ENCODE measurements at regions of chr1 and their contacts with region 1.

Region 1: DNA sequence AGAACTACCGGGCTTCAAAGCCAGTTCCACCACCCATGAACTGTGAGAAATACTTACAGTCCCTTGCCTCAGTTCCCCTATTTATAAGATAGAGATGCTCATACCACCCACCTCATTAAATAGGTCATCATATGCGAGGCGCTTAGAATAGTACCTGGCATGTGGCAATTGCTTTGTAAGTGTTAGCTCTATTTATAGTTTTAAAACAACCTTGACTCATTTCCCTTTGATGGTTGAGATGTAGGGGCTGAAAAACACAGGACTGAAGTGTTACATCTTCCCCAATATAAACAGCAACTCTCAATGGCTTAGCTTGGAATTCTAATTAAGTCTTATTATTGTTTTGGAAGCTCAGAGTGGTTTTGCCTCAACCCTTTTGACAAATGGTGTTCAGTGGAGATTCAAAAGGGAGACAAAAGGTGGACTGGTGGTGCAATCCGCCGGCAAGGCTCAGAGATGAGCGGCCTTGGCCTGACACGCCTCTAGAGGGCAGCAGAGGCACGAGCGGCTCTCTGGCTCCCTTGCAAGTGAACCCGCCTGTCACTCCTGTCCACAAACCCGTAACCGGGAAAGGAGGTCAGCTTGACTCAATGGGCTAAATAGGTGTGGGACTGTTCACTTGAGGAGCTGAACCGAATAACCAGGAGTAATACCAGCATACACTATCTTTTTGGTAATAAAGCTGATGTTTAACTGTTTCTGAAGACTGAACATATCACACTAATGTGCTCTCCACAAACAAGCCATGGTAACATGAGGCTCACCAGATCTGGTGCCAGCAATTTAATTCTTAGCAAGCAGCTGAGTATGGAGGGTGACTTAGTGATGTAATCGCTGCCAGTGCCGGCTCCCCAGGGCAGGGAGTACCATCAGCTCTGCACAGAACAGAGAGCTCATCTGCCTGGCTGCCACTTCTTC is 19.5 kb upstream of the SMYD2 start:
- DNase-seq: peak; percentile 93
- ATAC-seq: peak; percentile 92
- H3K4me3 Mint-ChIP-seq: no peak overlapping the region
- H3K27ac Mint-ChIP-seq: no peak overlapping the region
- H3K4me1 Mint-ChIP-seq: peaks cover 22% of the 10 kb centered on the region
- H3K27me3 Mint-ChIP-seq: no peaks in the 10 kb centered on the region; the same call in 1 of the 2 replicates
- CTCF ChIP-seq: peak; percentile 86

Region 2: DNA sequence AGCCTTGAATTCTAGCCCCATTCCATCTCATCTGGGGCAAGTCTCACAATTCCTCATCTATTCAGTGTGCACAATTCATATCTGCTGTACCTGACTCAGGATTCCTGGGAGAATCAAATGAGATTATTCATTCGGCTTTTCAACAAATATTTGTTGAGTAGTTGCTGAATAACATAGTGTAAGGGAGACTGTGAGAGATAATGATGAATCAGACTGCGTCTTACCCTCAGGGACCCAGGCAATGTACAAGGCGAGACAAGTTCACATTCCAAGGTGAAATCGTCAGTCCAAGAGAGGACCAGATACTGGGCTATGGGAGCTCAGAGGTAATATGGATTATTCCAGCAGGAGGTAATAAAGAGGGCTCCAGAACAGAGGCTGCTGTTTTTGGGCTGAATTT is 48.3 kb before region 1 on chr1:
- CTCF ChIA-PET with region 1: interaction called, 31 read pairs
- POLR2A ChIA-PET with region 1: no interaction called
- DNase-seq: no peak
- ATAC-seq: no peak
- H3K4me3 Mint-ChIP-seq: no peak overlapping the region
- H3K27ac Mint-ChIP-seq: no peak overlapping the region
- H3K4me1 Mint-ChIP-seq: peaks cover 26% of the 10 kb centered on the region
- H3K27me3 Mint-ChIP-seq: no peaks in the 10 kb centered on the region
- CTCF ChIP-seq: no peak

Region 3: DNA sequence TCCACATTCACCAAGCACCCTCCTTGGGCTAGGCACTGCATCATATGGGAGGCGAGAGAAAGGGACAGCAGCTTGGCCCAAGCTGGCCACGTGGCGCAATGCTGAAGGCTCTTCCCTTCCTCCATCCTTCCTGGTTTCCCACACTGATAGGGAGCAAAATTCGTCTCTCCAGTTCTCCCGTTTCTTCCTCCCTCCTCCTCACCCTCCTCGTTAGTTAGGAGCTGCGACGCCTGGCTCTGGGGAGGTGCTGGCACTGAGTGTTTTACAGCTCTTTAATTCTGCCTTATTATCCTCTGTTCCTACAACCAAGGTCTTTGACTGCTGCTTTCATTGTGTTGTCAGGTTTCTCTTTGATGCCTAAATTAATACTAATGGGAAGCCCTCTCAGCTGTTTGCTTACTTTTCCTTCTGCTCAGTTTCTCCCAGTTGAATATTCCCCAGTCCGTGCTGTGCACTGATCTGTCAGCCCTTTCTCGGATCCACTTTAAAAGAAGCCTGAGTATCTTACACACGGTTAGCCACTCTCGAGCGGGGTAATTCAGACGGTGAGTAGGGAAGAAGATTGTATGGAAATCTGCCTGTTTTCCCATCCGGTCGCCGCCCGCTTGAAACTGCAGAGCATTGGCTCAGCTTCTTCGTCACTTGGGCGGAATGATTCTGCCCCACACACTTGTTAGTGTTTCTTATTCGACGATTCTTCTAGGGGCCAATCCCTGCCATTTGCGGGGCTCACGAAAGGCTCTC is 36.7 kb before region 1 on chr1:
- CTCF ChIA-PET with region 1: interaction called, 16 read pairs
- POLR2A ChIA-PET with region 1: no interaction called
- DNase-seq: no peak
- ATAC-seq: peak; percentile 85
- H3K4me3 Mint-ChIP-seq: peak overlapping the region; percentile 63
- H3K27ac Mint-ChIP-seq: no peak overlapping the region
- H3K4me1 Mint-ChIP-seq: peaks cover 27% of the 10 kb centered on the region
- H3K27me3 Mint-ChIP-seq: peaks cover 27% of the 10 kb centered on the region
- CTCF ChIP-seq: no peak

Region 4: DNA sequence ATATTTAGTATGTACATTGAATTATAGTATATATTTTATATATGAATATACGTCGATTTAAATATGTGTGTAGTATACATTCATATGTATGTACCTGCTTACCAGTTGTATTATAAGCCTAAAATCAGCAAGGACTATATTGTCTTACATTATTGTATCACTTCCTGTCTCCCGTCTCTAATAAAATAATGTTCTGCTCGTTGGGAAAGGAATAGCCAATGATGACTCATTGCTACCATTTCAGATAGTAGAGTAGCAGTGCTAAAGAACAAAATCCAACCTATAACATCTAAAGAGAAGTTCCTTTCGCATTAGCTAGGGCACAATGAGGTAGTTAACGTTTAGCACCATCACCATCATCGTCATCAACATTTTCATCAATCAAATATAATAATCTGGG is 20.4 kb before region 1 on chr1:
- CTCF ChIA-PET with region 1: no interaction called
- POLR2A ChIA-PET with region 1: no interaction called
- DNase-seq: no peak
- ATAC-seq: no peak
- H3K4me3 Mint-ChIP-seq: no peak overlapping the region
- H3K27ac Mint-ChIP-seq: no peak overlapping the region
- H3K4me1 Mint-ChIP-seq: peaks cover 6% of the 10 kb centered on the region; the same call in 1 of the 2 replicates
- H3K27me3 Mint-ChIP-seq: no peaks in the 10 kb centered on the region
- CTCF ChIP-seq: no peak

Region 5: DNA sequence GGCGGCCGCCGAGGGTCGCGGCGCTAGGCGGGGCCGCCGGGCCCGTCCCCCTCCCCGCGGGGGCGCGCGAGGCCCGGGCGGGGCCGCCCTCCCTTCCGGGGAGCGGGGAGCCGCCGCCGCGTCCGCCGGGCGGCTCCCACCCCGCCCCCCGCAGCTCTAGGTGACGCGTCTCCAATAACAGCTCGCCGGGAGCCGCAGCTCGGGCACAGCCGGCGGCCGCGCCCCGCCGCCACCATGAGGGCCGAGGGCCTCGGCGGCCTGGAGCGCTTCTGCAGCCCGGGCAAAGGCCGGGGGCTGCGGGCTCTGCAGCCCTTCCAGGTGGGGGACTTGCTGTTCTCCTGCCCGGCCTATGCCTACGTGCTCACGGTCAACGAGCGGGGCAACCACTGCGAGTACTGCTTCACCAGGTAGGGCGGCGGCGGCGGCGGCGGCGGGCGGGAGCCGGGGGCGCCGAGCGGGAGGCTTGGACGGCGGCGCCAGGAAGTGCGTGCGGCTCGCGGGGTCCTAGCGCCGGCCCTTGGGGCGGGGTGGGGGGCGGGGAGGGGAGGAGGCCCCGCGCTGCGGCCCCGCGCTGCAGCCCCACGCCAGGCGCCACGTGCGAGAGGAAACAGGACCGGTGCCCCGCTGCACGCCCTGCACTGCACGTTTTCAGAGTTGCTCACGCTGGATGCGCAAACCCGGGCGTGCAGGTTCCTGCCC is 19.7 kb after region 1 on chr1 and contains the start of gene SMYD2:
- CTCF ChIA-PET with region 1: interaction called, 13 read pairs
- POLR2A ChIA-PET with region 1: no interaction called
- DNase-seq: peak; percentile 75
- ATAC-seq: peak; percentile 65
- H3K4me3 Mint-ChIP-seq: peak within 1 kb of the TSS; percentile 83
- H3K27ac Mint-ChIP-seq: peak within 1 kb of the TSS; percentile 82
- H3K4me1 Mint-ChIP-seq: peaks cover 37% of the 10 kb centered on the region
- H3K27me3 Mint-ChIP-seq: peaks cover 59% of the 10 kb centered on the region
- CTCF ChIP-seq: no peak
- total RNA-seq, gene SMYD2: 6.3 to 6.8 TPM (median 6.4 TPM) in 3 replicates

Region 6: DNA sequence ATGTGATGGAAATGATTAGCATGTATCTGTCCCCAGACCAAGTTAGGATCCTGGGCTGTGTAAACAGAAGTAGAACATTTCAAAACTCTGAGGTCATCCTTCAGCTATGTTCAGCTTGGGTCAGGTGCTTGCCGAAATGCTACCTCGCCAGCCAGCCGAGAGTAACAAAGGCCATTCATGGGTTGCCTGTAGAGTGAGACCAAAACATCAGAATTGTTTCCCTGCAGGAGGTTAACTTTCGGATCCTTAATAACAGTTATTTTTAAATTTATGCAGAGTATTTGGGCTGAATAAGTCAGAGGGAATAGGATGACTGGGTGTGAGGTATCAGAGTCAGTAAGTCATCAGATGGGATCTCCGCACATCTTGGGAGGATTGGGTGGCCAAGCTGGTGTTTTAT is 55.1 kb after region 1 on chr1:
- CTCF ChIA-PET with region 1: interaction called, 57 read pairs
- POLR2A ChIA-PET with region 1: no interaction called
- DNase-seq: peak; percentile 63
- ATAC-seq: peak; percentile 84
- H3K4me3 Mint-ChIP-seq: peak overlapping the region; percentile 44
- H3K27ac Mint-ChIP-seq: peak overlapping the region; percentile 85
- H3K4me1 Mint-ChIP-seq: peaks cover 61% of the 10 kb centered on the region
- H3K27me3 Mint-ChIP-seq: peaks cover 82% of the 10 kb centered on the region
- CTCF ChIP-seq: no peak

Region 7: GRCh38 chr1:214321705-214322453 is 60.4 kb after region 1 on chr1:
- CTCF ChIA-PET with region 1: interaction called, 275 read pairs
- POLR2A ChIA-PET with region 1: no interaction called
- DNase-seq: no peak
- ATAC-seq: no peak
- H3K4me3 Mint-ChIP-seq: no peak overlapping the region
- H3K27ac Mint-ChIP-seq: no peak overlapping the region
- H3K4me1 Mint-ChIP-seq: peaks cover 44% of the 10 kb centered on the region
- H3K27me3 Mint-ChIP-seq: peaks cover 31% of the 10 kb centered on the region
- CTCF ChIP-seq: no peak

Region 8: GRCh38 chr1:214717351-214717750 is 455.9 kb after region 1 on chr1:
- CTCF ChIA-PET with region 1: no interaction called
- POLR2A ChIA-PET with region 1: no interaction called
- DNase-seq: no peak
- ATAC-seq: no peak
- H3K4me3 Mint-ChIP-seq: no peak overlapping the region
- H3K27ac Mint-ChIP-seq: no peak overlapping the region
- H3K4me1 Mint-ChIP-seq: no peaks in the 10 kb centered on the region
- H3K27me3 Mint-ChIP-seq: no peaks in the 10 kb centered on the region
- CTCF ChIP-seq: no peak